ENCODE measurements at regions of chr12 and their contacts with region 1.

Region 1: GRCh38 chr12:102948941-102949352 is 8.5 kb upstream of the ASCL1 start:
- DNase-seq: no peak
- H3K4me3 ChIP-seq: no peak overlapping the region
- H3K27ac ChIP-seq: no peak overlapping the region
- H3K4me1 ChIP-seq: peaks cover 0 to 5% (median 0%) of the 10 kb centered on the region in 3 donors
- H3K27me3 ChIP-seq: peaks cover 0 to 85% (median 7%) of the 10 kb centered on the region in 4 donors
- CTCF ChIP-seq: peak; percentile 67 to 89 (median 78)
- POLR2A ChIP-seq: no peak

Region 2: GRCh38 chr12:102896067-102896466 is 52.9 kb before region 1 on chr12:
- intact Hi-C with region 1: no loop called
- DNase-seq: no peak
- H3K4me3 ChIP-seq: no peak overlapping the region
- H3K27ac ChIP-seq: no peak overlapping the region
- H3K4me1 ChIP-seq: no peaks in the 10 kb centered on the region
- H3K27me3 ChIP-seq: no peaks in the 10 kb centered on the region
- CTCF ChIP-seq: no peak
- POLR2A ChIP-seq: no peak

Region 3: DNA sequence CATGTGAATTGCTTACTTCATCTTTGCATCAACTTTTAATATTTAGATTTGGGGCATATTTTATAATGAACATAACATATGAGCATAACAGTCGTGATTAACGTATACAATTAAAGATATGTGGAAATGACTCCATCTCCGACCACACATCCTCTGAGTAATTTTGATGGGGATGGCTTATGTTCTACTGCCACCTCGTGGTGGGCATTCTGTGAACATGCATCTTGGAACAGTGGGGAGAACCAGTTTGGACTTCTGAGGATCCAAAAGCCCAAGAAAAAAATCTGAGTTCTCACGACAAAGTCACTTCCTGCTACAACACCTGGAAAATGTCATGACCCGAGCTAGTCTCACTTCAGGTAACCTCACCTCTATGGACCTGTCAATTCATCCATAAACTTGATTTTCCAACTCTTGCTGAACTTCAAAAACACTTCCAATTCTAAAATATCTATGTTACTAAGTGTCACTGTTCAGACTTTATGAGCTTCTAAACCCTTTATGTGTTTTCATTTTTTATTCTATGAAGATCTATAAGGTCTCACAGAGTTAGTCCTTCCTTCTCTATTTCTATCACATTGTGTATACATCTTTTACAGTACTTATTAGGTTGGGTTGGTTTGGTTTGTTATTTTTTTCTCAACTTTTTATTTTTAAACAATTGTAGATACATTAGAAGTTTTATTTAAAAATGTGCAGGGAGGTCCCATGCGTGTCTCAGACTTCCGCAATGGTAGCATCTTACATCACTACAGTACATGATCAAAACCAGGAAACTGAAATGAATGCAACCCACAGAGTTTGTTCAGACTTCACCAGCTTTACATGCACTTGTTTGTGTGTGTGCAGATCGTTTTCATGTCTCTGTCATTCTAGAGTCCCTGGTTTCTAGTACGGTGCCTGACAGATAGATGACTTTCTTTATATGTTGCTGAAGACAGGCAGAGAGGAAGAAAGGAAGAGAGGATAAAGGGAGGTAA is 600.0 kb after region 1 on chr12:
- intact Hi-C with region 1: loop called (anchors 10 kb)
- DNase-seq: no peak
- H3K4me3 ChIP-seq: no peak overlapping the region
- H3K27ac ChIP-seq: no peak overlapping the region
- H3K4me1 ChIP-seq: no peaks in the 10 kb centered on the region
- H3K27me3 ChIP-seq: peaks cover 0 to 31% (median 0%) of the 10 kb centered on the region in 4 donors
- CTCF ChIP-seq: peak; percentile 69 to 87 (median 78)
- POLR2A ChIP-seq: no peak

Measured in esophagus squamous epithelium (tissue), 5 donors.